Prostate gland (tissue), 2 donors: ENCODE measurements at regions of chr2 and their contacts with region 1.

Region 1: DNA sequence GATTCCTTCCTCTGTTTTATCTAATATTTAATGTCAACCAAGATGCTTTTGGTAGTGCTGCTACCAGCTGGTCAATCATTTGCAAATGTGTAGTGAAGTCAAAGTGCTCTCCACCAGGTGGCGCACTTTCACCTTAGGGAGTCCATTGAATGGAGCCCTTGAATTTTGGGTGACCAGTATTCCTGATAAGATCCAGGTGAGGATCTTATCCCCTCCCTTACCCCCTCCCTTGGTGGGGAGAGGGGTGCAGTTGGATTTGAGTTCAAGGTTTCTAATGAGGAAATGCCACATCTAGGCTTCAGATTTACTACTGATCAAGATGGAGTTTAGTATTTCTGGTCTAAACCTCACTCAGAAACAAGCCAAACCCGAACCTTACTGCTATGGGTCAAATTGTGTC is 12.0 kb upstream of the E2F6 start:
- DNase-seq: peak; percentile 94
- H3K4me3 ChIP-seq: no peak overlapping the region
- H3K27ac ChIP-seq: no peak overlapping the region
- H3K4me1 ChIP-seq: peaks cover 4% of the 10 kb centered on the region
- H3K27me3 ChIP-seq: no peaks in the 10 kb centered on the region
- CTCF ChIP-seq: peak; percentile 86 to 99 (median 92)
- POLR2A ChIP-seq: no peak

Region 2: DNA sequence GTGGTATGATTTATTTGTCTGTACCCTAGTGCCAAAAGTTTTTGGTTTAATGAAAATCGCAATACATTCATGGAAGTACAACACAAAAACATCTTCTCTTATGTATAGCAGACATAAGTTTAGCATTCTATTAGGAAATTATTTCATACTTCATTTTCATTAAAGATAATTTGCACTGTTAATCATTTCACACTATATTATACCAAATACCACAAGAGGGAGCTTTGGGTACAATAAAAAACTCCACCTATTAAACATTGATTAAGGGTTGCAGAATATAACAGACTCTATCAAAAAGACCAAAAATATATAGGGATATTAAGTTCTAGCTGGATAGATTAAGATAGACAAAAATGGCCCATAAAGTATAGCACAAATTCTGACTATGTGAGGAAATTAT is 243.7 kb before region 1 on chr2:
- intact Hi-C with region 1: no loop called
- DNase-seq: no peak
- H3K4me3 ChIP-seq: no peak overlapping the region
- H3K27ac ChIP-seq: no peak overlapping the region
- H3K4me1 ChIP-seq: no peaks in the 10 kb centered on the region
- H3K27me3 ChIP-seq: no peaks in the 10 kb centered on the region
- CTCF ChIP-seq: peak in 3 of 4 experiments; percentile 52 to 67 (median 66)
- POLR2A ChIP-seq: no peak

Region 3: DNA sequence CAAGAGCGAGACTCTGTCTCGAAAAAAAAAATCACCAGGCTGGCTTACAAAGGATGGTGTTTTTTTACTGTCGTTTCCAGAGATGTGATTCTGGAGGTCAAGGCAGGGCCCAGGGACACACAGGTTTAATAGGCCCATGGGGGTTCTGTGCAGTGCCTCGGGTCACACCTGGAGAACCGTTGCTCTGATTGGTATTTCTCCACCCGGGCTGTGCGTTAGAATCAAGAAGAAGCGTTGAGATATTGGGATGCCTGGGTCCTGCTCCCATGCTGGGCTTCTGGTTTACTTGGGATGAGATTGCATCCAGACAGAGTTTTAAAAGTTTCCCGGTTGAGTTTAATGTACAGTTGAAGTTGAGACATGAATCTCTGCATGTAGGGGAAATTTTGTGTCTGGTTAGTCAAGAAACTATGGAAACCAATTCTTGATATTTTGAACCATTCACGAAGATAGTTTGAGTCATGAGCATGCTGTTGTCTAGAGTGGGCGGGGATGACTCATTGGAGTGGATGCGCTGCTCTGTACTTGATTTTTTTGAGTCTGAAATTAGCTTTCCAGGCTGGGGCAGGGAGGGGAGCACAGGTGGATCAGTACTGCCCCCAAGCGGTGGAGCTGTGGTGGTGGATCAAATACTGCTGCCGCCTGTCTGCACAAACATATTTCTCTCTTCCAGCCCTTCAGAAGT is 106.0 kb after region 1 on chr2:
- intact Hi-C with region 1: loop called (anchors 1 kb)
- DNase-seq: peak; percentile 50
- H3K4me3 ChIP-seq: no peak overlapping the region
- H3K27ac ChIP-seq: peak overlapping the region; percentile 49 to 50
- H3K4me1 ChIP-seq: no peaks in the 10 kb centered on the region
- H3K27me3 ChIP-seq: no peaks in the 10 kb centered on the region
- CTCF ChIP-seq: peak; percentile 72 to 87 (median 79)
- POLR2A ChIP-seq: no peak

Region 4: DNA sequence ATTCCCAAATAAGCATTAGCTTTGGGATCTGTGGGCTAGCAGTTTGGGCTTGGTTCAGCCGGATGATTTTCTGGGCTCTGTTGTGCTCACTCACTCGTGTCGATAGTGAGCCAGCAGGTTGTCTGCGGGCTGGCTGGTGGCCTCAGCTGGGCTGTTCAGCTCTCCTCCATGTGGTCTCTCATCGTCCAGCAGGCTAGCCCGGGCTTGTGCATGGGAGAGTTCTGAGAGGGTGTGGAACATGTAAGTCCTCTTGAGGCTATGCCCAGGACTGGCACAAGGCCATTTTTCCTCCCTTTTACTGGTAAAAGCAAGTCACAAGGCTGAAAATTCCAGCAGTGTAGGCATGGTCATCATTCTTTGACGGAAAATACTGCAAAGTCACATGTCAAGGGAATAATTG is 153.5 kb after region 1 on chr2:
- intact Hi-C with region 1: no loop called
- DNase-seq: peak; percentile 30
- H3K4me3 ChIP-seq: no peak overlapping the region
- H3K27ac ChIP-seq: no peak overlapping the region
- H3K4me1 ChIP-seq: no peaks in the 10 kb centered on the region
- H3K27me3 ChIP-seq: no peaks in the 10 kb centered on the region
- CTCF ChIP-seq: no peak
- POLR2A ChIP-seq: no peak

Region 5: DNA sequence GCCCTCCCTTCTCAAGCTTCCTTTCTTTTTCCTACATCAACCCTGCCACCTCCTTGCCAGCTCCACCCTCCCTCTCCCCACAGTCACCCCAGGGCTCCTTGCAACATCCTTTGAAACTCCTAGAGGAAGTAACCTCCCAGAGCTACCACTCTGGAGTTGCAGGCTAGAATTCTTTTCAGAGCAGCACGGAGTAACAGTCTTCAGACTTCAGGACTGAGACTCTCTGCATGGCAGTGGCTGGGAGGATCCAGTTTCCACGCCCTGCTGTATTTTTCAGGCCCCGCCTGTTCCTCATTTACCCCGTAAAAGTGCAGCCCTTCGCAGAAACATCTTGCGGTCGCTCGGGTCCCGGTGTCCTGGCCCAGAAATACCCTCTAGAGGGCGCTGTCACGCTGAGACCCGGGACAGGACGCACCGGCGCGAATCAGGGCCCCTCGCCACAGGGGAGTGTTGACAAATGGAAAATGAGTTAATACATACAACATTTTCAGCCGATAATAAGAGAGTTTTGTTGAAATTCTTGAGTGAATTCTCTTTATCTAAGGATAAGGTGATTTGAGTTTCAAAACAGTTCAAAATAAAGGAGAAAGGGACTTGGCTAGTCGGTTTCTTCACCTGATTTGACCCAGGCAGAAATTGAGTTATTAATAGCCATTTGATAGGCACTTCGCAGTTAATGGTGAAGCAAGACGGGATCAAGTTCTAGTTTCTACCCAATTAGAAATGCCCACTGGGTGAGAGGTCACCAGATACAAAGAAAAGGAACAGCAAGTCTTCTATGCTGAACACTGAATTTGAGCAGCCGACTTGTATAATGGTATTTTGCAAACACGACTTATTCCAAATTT is 210.5 kb after region 1 on chr2:
- intact Hi-C with region 1: loop called (anchors 10 kb)
- DNase-seq: peak; percentile 65
- H3K4me3 ChIP-seq: no peak overlapping the region
- H3K27ac ChIP-seq: no peak overlapping the region
- H3K4me1 ChIP-seq: no peaks in the 10 kb centered on the region
- H3K27me3 ChIP-seq: no peaks in the 10 kb centered on the region
- CTCF ChIP-seq: peak; percentile 52 to 76 (median 72)
- POLR2A ChIP-seq: no peak

Region 6: GRCh38 chr2:11784747-11785610 is 307.0 kb after region 1 on chr2:
- intact Hi-C with region 1: loop called (anchors 10 kb)
- DNase-seq: peak; percentile 15
- H3K4me3 ChIP-seq: peak overlapping the region in 1 of 2 donors; percentile 15
- H3K27ac ChIP-seq: no peak overlapping the region
- H3K4me1 ChIP-seq: no peaks in the 10 kb centered on the region
- H3K27me3 ChIP-seq: no peaks in the 10 kb centered on the region
- CTCF ChIP-seq: peak; percentile 67 to 87 (median 80)
- POLR2A ChIP-seq: no peak